ENCODE measurements at regions of chr1 and their contacts with region 1.

Region 1: DNA sequence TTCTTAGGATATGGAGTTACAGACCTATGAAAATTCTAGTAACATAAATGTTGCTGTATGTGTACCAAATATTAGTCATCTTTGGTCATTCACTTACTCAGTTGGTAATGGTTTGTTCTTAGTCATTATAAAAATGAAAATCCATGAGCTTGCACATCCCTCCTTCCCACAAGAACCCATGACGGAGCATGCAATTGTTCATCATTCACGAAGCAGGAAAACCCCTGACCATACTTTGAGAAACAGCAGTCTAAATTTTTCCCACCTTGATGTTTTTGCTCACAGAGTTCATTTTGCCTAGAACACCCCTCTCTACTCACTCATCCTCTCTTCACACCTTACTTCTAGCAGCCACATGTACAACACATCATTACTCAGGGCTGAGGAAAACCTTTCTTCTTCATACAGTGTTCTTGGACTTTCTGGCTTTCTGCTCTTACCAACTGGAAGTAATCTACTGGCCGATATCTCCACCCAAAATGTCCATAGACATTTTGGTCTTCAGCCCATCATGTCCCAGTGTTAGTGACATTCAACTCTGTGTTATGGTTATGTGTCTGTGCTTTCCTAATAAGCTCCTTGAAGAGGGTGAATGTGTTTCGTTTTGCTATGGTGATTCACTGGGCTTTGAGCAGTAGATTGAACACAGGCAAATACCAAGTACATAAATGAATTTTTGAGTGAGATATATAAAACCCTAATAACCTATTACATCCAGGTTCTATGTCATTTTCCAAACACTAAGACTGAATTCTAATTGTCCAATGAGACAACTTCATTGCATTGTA is 189.9 kb downstream of the ZC3H11B start:
- DNase-seq: peak; percentile 23
- ATAC-seq: peak; percentile 81
- H3K4me3 ChIP-seq: no peak overlapping the region
- H3K27ac ChIP-seq: peak overlapping the region; percentile 42; the same call in 1 of the 2 replicates
- H3K4me1 ChIP-seq: peaks cover 3% of the 10 kb centered on the region; the same call in 1 of the 2 replicates
- H3K27me3 ChIP-seq: no peaks in the 10 kb centered on the region
- CTCF ChIP-seq: no peak
- EP300 ChIP-seq: peak in 1 of 2 experiments; percentile 48; a peak in 1 of 4 replicates
- POLR2A ChIP-seq: no peak
- RAD21 ChIP-seq: no peak

Region 2: DNA sequence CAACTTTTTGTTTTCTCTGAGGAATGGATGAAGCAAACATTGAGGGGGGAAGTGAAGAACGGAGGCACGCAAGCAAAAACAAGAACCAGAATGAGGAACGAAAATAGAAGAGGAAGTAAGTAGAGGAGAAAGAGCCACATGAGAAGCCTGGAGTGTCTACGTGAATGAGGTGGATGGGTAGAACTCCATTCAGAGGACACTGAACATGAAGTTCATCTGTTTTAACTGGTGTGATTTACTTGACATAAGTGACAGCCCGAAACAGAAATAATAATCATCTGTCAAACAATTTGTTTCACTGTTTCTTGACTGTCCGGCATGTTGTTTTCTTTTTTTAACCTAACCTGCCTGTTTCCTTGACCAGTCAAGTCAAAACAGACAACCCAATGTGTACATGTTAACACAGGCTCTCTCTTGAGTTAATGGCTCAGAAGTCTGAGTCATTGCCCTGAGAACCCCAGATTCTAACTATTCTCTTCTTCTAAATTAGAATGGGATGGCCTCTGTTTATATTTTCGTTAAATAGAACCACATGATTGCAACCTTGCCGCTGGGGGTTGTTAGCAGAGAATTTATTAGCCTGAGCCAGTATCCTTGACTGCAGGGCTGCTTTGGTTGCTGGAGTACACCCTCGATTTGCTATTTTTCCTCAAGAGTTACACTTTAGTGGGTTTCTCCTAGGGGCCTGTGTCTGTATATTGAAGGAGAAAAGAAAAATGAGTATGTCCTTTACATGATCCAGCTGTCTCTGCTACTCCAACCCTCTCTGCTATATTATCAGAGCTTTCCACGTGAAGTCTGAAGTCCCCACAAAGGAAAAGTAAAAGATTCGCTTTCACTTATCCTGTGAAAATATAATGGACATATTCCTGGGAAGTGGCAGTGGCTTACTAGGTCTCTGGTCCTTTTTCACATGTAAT is 38.2 kb after region 1 on chr1:
- CTCF ChIA-PET with region 1: no interaction called
- POLR2A ChIA-PET with region 1: interaction called, 3 read pairs
- RAD21 ChIA-PET with region 1: no interaction called
- SMC1A ChIA-PET with region 1: no interaction called
- in situ Hi-C with region 1: no loop called
- intact Hi-C with region 1: loop called (anchors 1 kb)
- DNase-seq: peak; percentile 79
- ATAC-seq: peak; percentile 86
- H3K4me3 ChIP-seq: peak overlapping the region; percentile 28; the same call in 1 of the 2 replicates
- H3K27ac ChIP-seq: peak overlapping the region; percentile 90
- H3K4me1 ChIP-seq: peaks cover 46% of the 10 kb centered on the region
- H3K27me3 ChIP-seq: no peaks in the 10 kb centered on the region
- CTCF ChIP-seq: no peak
- EP300 ChIP-seq: peak in 1 of 2 experiments; percentile 76; a peak in 1 of 4 replicates
- POLR2A ChIP-seq: no peak
- RAD21 ChIP-seq: peak; percentile 33

Region 3: GRCh38 chr1:219476116-219476515 is 53.1 kb after region 1 on chr1:
- CTCF ChIA-PET with region 1: no interaction called
- POLR2A ChIA-PET with region 1: no interaction called
- RAD21 ChIA-PET with region 1: no interaction called
- SMC1A ChIA-PET with region 1: no interaction called
- in situ Hi-C with region 1: no loop called
- intact Hi-C with region 1: loop called (anchors 2 kb)
- DNase-seq: peak; percentile 45
- ATAC-seq: peak; percentile 89
- H3K4me3 ChIP-seq: no peak overlapping the region
- H3K27ac ChIP-seq: no peak overlapping the region
- H3K4me1 ChIP-seq: peaks cover 18% of the 10 kb centered on the region
- H3K27me3 ChIP-seq: no peaks in the 10 kb centered on the region
- CTCF ChIP-seq: no peak
- EP300 ChIP-seq: peak in 1 of 2 experiments; percentile 29; a peak in 1 of 4 replicates
- POLR2A ChIP-seq: no peak
- RAD21 ChIP-seq: no peak

Measured in GM12878 (cell line).